Activated CD8-positive, alpha-beta T cell treated with anti-CD3 and anti-CD28 coated beads for 36 hours (primary cell): ENCODE measurements at regions of chr5 and their contacts with region 1.

Region 1: GRCh38 chr5:317086-317811 is 4.3 kb upstream of the AHRR start:
- DNase-seq: peak; percentile 83
- ATAC-seq: peak; percentile 87
- H3K4me3 Mint-ChIP-seq: no peak overlapping the region
- H3K27ac Mint-ChIP-seq: peak overlapping the region; percentile 67
- H3K4me1 Mint-ChIP-seq: peaks cover 16% of the 10 kb centered on the region
- H3K27me3 Mint-ChIP-seq: peaks cover 17% of the 10 kb centered on the region
- CTCF ChIP-seq: peak; percentile 86

Region 2: DNA sequence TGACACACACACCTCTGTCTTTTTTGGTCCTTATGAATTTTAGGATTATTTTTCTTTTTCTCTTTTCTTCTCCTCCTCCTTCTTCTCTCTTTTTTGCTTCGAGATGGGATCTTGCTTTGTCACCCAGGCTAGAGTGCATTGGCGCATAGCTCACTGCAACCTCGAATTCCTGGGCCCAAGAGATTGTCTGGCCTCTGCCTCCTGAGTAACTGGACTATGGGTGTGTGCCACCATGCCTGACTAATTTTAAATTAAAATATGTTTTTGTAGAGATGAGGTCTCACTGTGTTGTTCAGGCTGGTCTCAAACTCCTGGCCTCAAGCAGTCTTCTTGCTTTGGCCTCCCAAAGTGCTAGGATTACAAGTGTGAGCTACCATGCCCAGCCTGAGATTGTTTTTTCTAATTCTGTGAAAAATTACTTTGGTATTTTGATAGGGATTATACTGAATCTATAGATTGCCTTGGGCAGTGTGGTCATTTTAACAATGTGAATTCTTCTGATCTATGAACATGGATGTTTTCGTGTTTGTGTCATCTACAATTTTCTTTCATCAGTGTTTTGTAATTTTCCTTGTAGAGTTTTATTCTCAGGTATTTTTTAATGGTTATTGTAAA is 12.0 kb after region 1 on chr5:
- CTCF ChIA-PET with region 1: no interaction called
- POLR2A ChIA-PET with region 1: no interaction called
- intact Hi-C with region 1: no loop called
- DNase-seq: no peak
- ATAC-seq: no peak
- H3K4me3 Mint-ChIP-seq: no peak overlapping the region
- H3K27ac Mint-ChIP-seq: no peak overlapping the region
- H3K4me1 Mint-ChIP-seq: peaks cover 29% of the 10 kb centered on the region
- H3K27me3 Mint-ChIP-seq: peaks cover 13% of the 10 kb centered on the region
- CTCF ChIP-seq: no peak

Region 3: GRCh38 chr5:425714-426113 is 108.5 kb after region 1 on chr5:
- CTCF ChIA-PET with region 1: interaction called, 55 read pairs
- POLR2A ChIA-PET with region 1: interaction called, 4 read pairs
- intact Hi-C with region 1: loop called (anchors 5 kb)
- DNase-seq: peak; percentile 34
- ATAC-seq: no peak
- H3K4me3 Mint-ChIP-seq: no peak overlapping the region
- H3K27ac Mint-ChIP-seq: no peak overlapping the region
- H3K4me1 Mint-ChIP-seq: peaks cover 24% of the 10 kb centered on the region
- H3K27me3 Mint-ChIP-seq: peaks cover 8% of the 10 kb centered on the region
- CTCF ChIP-seq: peak; percentile 55

Region 4: GRCh38 chr5:431001-431710 is 113.9 kb after region 1 on chr5:
- CTCF ChIA-PET with region 1: interaction called, 55 read pairs
- POLR2A ChIA-PET with region 1: interaction called, 4 read pairs
- intact Hi-C with region 1: loop called (anchors 5 kb)
- DNase-seq: peak; percentile 58
- ATAC-seq: peak; percentile 93
- H3K4me3 Mint-ChIP-seq: no peak overlapping the region
- H3K27ac Mint-ChIP-seq: no peak overlapping the region
- H3K4me1 Mint-ChIP-seq: peaks cover 10% of the 10 kb centered on the region
- H3K27me3 Mint-ChIP-seq: peaks cover 6% of the 10 kb centered on the region
- CTCF ChIP-seq: peak; percentile 87